Activated T-helper 2 cell treated with anti-CD3 and anti-CD28 coated beads, Interferon-gamma antibody, Interleukin-2, Interleukin-4, amounts not matched to agents 10 μg/mL and 5 μg/mL and 100 μg/mL, durations not matched to agents 14 hours and 24 hours and 36 hours (primary cell): ENCODE measurements at regions of chr17 and their contacts with region 1.

Region 1: GRCh38 chr17:48543107-48543853 is 1.6 kb downstream of the HOXB2 start:
- DNase-seq: peak; percentile 63
- H3K4me3 Mint-ChIP-seq: peak overlapping the region; percentile 94
- H3K27ac Mint-ChIP-seq: peak overlapping the region; percentile 94
- H3K4me1 Mint-ChIP-seq: peaks cover 36% of the 10 kb centered on the region
- H3K27me3 Mint-ChIP-seq: peaks cover 1% of the 10 kb centered on the region

Region 2: DNA sequence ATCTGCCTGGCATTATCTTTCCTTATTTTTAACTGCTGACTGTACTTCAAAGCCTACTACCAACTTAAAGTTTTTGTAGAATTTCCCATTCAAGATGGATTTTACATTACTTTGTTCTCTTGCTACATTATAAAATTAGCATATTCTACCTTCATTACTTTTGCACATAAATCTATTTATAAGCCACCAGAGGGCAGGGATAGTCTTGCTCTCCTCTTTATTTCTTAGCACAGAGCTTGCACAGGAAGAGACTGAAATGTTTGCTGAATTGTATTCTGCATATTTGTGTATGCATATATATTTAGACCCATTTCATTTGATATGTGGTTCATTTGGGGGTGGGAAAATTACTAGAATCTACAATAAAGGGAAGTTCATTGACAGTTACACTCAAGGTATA is 221.2 kb before region 1 on chr17:
- intact Hi-C with region 1: no loop called
- DNase-seq: no peak
- H3K4me3 Mint-ChIP-seq: no peak overlapping the region
- H3K27ac Mint-ChIP-seq: no peak overlapping the region
- H3K4me1 Mint-ChIP-seq: peaks cover 10% of the 10 kb centered on the region
- H3K27me3 Mint-ChIP-seq: no peaks in the 10 kb centered on the region

Region 3: DNA sequence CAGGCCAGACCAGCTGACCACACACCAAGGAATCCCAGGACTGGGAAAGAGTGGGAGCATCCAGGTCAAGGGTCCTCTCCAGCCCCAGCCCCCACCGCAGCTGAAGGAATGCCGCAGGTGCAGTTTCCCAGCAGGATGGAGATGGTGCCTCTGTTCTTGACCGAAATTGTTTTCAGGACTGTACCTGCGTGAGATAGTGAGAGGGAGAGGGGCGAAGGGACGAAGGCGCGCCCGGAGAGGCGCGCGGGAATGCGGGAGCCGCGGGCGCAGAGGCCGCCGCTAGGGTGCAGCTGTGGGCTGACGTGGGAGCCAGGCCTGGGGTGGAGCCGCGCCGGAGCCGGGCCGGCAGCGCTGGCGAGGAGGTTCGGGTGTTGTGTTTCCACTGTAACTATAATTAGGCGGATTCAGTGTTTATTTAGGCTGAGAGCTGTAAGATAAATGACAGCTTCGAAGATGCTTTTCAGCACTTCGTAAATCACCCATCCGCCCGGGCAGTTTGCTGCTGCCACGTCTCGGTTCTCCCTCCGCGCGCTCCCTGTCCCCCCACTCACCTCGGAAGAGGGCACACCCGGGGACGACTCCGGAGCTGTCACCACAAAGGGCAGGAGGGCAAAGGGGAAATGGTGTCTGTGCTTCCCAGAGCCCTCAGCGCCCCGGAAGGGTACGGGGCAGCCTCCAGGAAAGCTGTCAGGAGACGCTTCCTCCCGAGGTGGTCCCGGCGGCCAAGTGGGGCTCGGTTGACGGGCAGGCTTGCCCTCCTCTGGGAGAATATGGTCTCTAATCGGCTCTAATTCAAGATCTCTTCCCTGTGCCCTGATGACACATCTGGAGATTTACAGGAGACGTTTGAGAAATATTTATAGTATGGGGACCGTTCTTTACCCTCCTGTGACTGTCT is 50.6 kb before region 1 on chr17:
- intact Hi-C with region 1: loop called (anchors 2 kb)
- DNase-seq: peak; percentile 61
- H3K4me3 Mint-ChIP-seq: peak overlapping the region; percentile 37
- H3K27ac Mint-ChIP-seq: no peak overlapping the region
- H3K4me1 Mint-ChIP-seq: peaks cover 36% of the 10 kb centered on the region
- H3K27me3 Mint-ChIP-seq: peaks cover 23% of the 10 kb centered on the region

Region 4: DNA sequence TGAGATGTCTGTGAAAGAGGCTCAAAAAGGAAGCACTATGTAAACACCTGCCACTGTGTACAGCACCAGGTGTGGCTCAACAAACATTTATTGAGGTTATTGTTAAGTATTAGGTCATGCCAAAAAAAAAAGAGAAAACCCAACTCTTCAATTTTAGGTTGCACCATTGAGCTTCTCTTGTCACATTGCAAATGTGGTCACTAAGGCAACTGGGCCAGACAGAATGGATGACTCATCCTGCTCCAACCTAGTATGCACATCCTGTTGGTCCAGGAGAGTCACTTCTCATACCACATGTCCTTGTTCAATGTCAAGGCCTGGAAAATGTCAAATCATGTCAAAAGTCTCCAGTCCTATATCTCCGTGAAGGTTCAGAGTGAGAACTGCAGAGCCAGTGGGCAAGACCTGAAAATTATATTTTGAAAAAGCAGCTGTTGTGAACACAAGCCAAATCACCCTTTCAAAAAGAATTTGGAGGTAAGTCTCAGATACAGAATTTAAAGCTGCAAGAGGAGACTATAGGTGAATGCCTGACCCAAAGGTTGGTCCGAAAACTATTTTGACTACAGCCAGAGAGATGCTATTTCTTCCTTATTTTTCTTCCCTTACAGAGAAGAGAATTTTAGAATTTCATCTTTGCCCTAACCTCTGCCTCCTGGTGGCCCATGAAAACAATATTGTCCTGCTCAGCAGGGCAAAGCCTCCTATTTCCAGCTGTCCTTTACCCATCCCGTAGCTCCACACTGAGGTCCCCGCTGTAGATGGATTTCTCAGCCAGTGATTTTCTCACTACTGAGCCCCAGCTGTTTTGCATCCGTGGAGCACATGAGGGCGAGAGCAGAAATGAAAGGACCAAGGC is 37.3 kb before region 1 on chr17:
- intact Hi-C with region 1: loop called (anchors 2 kb)
- DNase-seq: peak; percentile 60
- H3K4me3 Mint-ChIP-seq: no peak overlapping the region
- H3K27ac Mint-ChIP-seq: peak overlapping the region; percentile 63
- H3K4me1 Mint-ChIP-seq: peaks cover 33% of the 10 kb centered on the region
- H3K27me3 Mint-ChIP-seq: peaks cover 18% of the 10 kb centered on the region

Region 5: GRCh38 chr17:48577946-48578615 is 34.8 kb after region 1 on chr17 and contains the start of gene HOXB4:
- intact Hi-C with region 1: loop called (anchors 2 kb)
- DNase-seq: peak; percentile 70
- H3K4me3 Mint-ChIP-seq: peak within 1 kb of the TSS; percentile 85
- H3K27ac Mint-ChIP-seq: peak within 1 kb of the TSS; percentile 75
- H3K4me1 Mint-ChIP-seq: peaks cover 43% of the 10 kb centered on the region
- H3K27me3 Mint-ChIP-seq: peaks cover 42% of the 10 kb centered on the region
- total RNA-seq, gene HOXB4: 3.0 and 3.3 TPM in 2 replicates

Region 6: DNA sequence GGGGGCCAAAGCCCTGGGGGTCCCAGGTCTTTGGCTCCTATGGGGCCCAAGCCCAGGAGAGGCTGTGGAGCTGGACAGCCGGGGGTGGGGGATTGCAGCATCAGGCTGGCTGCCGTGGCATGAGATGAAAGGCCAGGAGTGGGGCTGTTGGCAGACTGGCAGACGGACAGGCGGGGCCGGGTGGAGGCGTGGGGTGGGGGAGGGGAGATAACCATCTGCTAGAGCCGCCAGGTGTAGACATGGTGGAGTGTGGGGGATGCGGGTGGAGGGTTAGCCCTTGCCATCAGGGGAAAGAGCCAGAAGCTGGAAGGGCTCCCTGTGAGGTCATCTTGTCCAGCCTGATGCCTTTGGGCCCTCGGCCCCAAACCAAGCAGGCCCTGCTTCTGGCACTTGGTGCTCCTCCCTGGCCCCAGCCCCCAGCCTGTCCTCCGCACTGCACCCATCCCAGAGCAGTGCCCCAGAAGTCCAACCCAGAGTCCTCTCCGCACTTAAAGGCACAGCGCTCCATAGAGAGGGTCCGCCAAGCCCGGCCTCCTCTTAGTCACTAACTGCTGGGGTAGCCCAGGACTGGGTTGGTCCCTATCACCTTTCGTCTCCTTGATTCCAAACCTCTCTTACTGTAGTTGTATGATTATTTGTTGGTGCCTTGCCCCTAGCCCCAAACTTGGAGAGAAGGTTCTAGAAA is 1392.4 kb after region 1 on chr17:
- intact Hi-C with region 1: no loop called
- DNase-seq: no peak
- H3K4me3 Mint-ChIP-seq: no peak overlapping the region
- H3K27ac Mint-ChIP-seq: no peak overlapping the region
- H3K4me1 Mint-ChIP-seq: peaks cover 2% of the 10 kb centered on the region
- H3K27me3 Mint-ChIP-seq: peaks cover 16% of the 10 kb centered on the region